B cell (primary cell): ENCODE measurements at regions of chr6 and their contacts with region 1.

Region 1: GRCh38 chr6:6547110-6547879 is 41.2 kb upstream of the LY86 start:
- DNase-seq: peak; percentile 89
- ATAC-seq: peak; percentile 86
- H3K4me3 ChIP-seq: peak overlapping the region; percentile 36 to 66 (median 50)
- H3K4me3 Mint-ChIP-seq: peak overlapping the region; percentile 90
- H3K27ac ChIP-seq: no peak overlapping the region
- H3K27ac Mint-ChIP-seq: no peak overlapping the region
- H3K4me1 ChIP-seq: peaks cover 14 to 15% of the 10 kb centered on the region in 2 donors
- H3K4me1 Mint-ChIP-seq: peaks cover 13% of the 10 kb centered on the region
- H3K27me3 ChIP-seq: peaks cover 0 to 34% (median 9%) of the 10 kb centered on the region in 4 experiments
- H3K27me3 Mint-ChIP-seq: peaks cover 33% of the 10 kb centered on the region
- CTCF ChIP-seq: peak; percentile 98

Region 2: DNA sequence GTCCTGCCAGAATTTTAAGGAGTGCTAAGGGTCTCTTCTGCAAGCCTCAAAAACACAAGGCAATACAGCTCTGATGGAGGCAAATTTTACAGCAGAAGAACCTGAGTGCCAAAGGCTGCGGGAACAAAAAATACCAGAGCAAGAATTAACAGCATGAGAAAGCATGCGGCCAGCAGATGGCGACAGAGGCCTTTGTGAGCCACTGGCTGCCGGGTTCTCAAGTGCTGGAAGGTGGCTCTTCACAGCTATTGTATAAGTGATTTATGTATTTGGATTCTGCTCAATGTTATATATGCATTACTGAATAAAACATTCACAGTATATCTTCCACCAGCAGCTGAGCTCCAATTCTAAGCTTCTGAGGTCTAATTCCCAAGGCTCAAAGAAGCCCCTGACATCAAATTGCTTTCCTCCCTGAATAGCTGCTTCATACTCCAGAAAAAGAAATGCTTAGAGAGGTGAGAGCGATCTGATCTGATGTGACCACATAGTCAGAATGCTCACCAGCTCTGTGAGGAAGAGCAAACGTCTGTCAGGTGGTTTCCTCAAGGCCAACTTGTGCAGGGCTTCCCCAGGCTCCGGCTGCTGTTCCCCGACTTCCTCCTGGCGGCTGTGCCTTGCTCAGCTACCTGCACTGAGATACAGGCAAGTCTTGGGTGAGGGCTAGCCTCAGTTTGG is 1403.5 kb before region 1 on chr6:
- CTCF ChIA-PET with region 1: interaction called, 15 read pairs
- POLR2A ChIA-PET with region 1: interaction called, 3 read pairs
- intact Hi-C with region 1: loop called (anchors 1 kb)
- DNase-seq: peak; percentile 85
- ATAC-seq: peak; percentile 70
- H3K4me3 ChIP-seq: no peak overlapping the region
- H3K4me3 Mint-ChIP-seq: no peak overlapping the region
- H3K27ac ChIP-seq: no peak overlapping the region
- H3K27ac Mint-ChIP-seq: no peak overlapping the region
- H3K4me1 ChIP-seq: peaks cover 10 to 22% of the 10 kb centered on the region in 2 donors
- H3K4me1 Mint-ChIP-seq: peaks cover 25% of the 10 kb centered on the region
- H3K27me3 ChIP-seq: no peaks in the 10 kb centered on the region
- H3K27me3 Mint-ChIP-seq: no peaks in the 10 kb centered on the region
- CTCF ChIP-seq: peak; percentile 96

Region 3: GRCh38 chr6:6057424-6058053 is 489.8 kb before region 1 on chr6:
- CTCF ChIA-PET with region 1: interaction called, 153 read pairs
- POLR2A ChIA-PET with region 1: interaction called, 6 read pairs
- intact Hi-C with region 1: loop called (anchors 1 kb)
- DNase-seq: peak; percentile 72
- ATAC-seq: peak; percentile 67
- H3K4me3 ChIP-seq: no peak overlapping the region
- H3K4me3 Mint-ChIP-seq: no peak overlapping the region
- H3K27ac ChIP-seq: no peak overlapping the region
- H3K27ac Mint-ChIP-seq: no peak overlapping the region
- H3K4me1 ChIP-seq: no peaks in the 10 kb centered on the region
- H3K4me1 Mint-ChIP-seq: no peaks in the 10 kb centered on the region
- H3K27me3 ChIP-seq: peaks cover 0 to 18% (median 13%) of the 10 kb centered on the region in 4 experiments
- H3K27me3 Mint-ChIP-seq: peaks cover 65% of the 10 kb centered on the region
- CTCF ChIP-seq: peak; percentile 77

Region 4: GRCh38 chr6:6315660-6316059 is 231.6 kb before region 1 on chr6:
- CTCF ChIA-PET with region 1: interaction called, 3 read pairs
- POLR2A ChIA-PET with region 1: no interaction called
- intact Hi-C with region 1: loop called (anchors 2 kb)
- DNase-seq: peak; percentile 62
- ATAC-seq: peak; percentile 48
- H3K4me3 ChIP-seq: no peak overlapping the region
- H3K4me3 Mint-ChIP-seq: no peak overlapping the region
- H3K27ac ChIP-seq: no peak overlapping the region
- H3K27ac Mint-ChIP-seq: no peak overlapping the region
- H3K4me1 ChIP-seq: peaks cover 15 to 18% of the 10 kb centered on the region in 2 donors
- H3K4me1 Mint-ChIP-seq: peaks cover 20% of the 10 kb centered on the region
- H3K27me3 ChIP-seq: peaks cover 0 to 29% (median 23%) of the 10 kb centered on the region in 4 experiments
- H3K27me3 Mint-ChIP-seq: peaks cover 60% of the 10 kb centered on the region
- CTCF ChIP-seq: peak; percentile 89

Region 5: GRCh38 chr6:6407071-6407741 is 140.1 kb before region 1 on chr6:
- CTCF ChIA-PET with region 1: interaction called, 9 read pairs
- POLR2A ChIA-PET with region 1: no interaction called
- intact Hi-C with region 1: loop called (anchors 1 kb)
- DNase-seq: peak; percentile 90
- ATAC-seq: peak; percentile 85
- H3K4me3 ChIP-seq: peak overlapping the region in 3 of 5 experiments; percentile 1 to 45 (median 32)
- H3K4me3 Mint-ChIP-seq: no peak overlapping the region
- H3K27ac ChIP-seq: peak overlapping the region; percentile 65 to 69
- H3K27ac Mint-ChIP-seq: no peak overlapping the region
- H3K4me1 ChIP-seq: peaks cover 24 to 25% of the 10 kb centered on the region in 2 donors
- H3K4me1 Mint-ChIP-seq: peaks cover 4% of the 10 kb centered on the region
- H3K27me3 ChIP-seq: peaks cover 0 to 18% (median 14%) of the 10 kb centered on the region in 4 experiments
- H3K27me3 Mint-ChIP-seq: peaks cover 24% of the 10 kb centered on the region
- CTCF ChIP-seq: no peak

Region 6: DNA sequence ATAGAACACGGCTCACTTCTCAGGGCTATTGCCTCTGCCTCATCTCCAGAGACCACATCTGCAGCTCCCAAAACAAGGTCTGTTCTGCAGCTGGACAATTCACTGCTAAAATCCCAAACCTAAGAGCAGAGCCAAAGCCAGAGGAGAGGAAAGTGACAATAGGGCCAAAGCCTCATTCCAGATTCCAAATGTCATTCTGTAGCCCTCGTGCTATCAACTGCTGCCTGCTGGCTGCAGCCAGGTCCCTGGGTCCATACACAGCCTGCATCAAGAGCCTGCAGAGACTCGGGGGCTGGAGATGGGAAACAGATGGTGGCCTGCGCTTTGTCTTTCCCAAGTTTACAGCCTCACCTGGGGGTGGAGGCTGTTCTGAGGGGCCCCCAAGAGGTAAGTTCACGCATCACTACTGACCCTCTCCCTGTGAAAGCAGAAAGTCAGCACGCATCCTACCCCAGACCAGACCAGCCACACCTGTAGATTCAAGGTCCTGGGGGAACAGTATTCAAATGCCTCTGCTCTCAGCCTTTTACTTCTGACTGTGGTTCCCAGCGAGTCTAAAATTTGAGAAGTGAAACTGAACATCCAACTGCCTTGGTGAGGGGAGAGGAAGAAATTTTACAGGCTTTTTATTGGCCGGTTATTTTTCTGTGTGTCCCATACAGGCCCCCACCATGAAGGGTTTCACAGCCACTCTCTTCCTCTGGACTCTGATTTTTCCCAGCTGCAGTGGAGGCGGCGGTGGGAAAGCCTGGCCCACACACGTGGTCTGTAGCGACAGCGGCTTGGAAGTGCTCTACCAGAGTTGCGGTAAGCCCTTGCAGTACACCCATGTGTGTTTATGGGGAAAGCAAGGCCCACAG is 41.0 kb after region 1 on chr6 and contains the start of gene LY86:
- CTCF ChIA-PET with region 1: interaction called, 171 read pairs
- POLR2A ChIA-PET with region 1: no interaction called
- intact Hi-C with region 1: loop called (anchors 5 kb)
- DNase-seq: peak; percentile 87
- ATAC-seq: peak; percentile 65
- H3K4me3 ChIP-seq: peak within 1 kb of the TSS; percentile 52 to 84 (median 81)
- H3K4me3 Mint-ChIP-seq: peak within 1 kb of the TSS; percentile 98
- H3K27ac ChIP-seq: peak within 1 kb of the TSS; percentile 88 to 91
- H3K27ac Mint-ChIP-seq: peak within 1 kb of the TSS; percentile 99
- H3K4me1 ChIP-seq: peaks cover 83 to 85% of the 10 kb centered on the region in 2 donors
- H3K4me1 Mint-ChIP-seq: peaks cover 93% of the 10 kb centered on the region
- H3K27me3 ChIP-seq: no peaks in the 10 kb centered on the region
- H3K27me3 Mint-ChIP-seq: no peaks in the 10 kb centered on the region
- CTCF ChIP-seq: peak; percentile 16
- total RNA-seq, gene LY86: 68.7 and 76.7 TPM in 2 replicates